ENCODE measurements at regions of chr22 and their contacts with region 1.

Region 1: DNA sequence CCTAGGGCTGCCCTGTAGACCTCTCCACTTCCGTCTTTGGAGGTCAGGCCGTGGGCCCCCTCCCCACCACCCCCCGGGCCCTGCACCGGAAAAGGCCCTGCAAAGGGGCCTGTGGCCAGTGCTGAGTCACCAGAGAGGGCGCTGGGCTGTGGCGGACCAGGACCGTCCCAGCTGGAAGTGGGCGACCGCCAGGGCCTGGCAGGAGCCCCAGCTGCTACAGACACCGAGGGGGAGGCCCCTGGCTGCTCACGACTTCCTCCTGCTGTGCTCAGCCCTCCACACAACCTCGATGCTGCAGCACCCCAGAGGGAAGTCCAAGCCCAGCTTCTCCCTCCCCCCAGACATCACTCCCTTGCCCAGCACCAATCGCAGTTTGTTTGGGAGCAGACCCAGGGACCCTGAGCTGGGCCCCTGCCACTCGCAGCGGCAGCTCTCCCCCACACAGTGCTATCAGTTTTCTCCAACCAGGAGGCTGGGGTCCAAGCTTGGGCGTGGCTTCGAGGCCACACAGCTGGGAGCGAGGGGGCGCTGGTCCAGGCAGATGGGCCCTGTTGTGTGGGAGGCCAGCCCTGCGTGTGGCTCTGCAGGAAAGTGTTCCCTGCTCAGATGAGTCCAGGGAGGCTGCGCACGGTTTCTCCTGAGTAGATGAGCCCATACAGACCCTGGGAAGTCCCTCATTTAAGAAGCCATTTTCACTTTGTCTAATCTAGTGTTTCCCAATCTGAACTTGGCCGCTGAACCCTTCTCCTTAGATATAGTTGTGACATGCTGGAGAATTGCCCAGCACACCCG is 5.6 kb upstream of the SH3BP1 start:
- DNase-seq: peak; percentile 66 to 80
- ATAC-seq: peak; percentile 57 to 73 (median 59)
- H3K4me3 ChIP-seq: peak overlapping the region; percentile 8
- H3K4me3 Mint-ChIP-seq: peak overlapping the region; percentile 80
- H3K27ac ChIP-seq: peak overlapping the region; percentile 83
- H3K27ac Mint-ChIP-seq: peak overlapping the region; percentile 93 to 99
- H3K4me1 ChIP-seq: peaks cover 99% of the 10 kb centered on the region
- H3K4me1 Mint-ChIP-seq: peaks cover 56 to 88% of the 10 kb centered on the region in 2 donors
- H3K27me3 ChIP-seq: no peaks in the 10 kb centered on the region
- H3K27me3 Mint-ChIP-seq: no peaks in the 10 kb centered on the region
- CTCF ChIP-seq: no peak

Region 2: GRCh38 chr22:36252754-36253517 is 1380.9 kb before region 1 on chr22 and contains the start of gene APOL1:
- intact Hi-C with region 1: no loop called
- DNase-seq: peak; percentile 31 to 83
- ATAC-seq: peak; percentile 95 to 98 (median 96)
- H3K4me3 ChIP-seq: peak within 1 kb of the TSS; percentile 40
- H3K4me3 Mint-ChIP-seq: peak within 1 kb of the TSS; percentile 92
- H3K27ac ChIP-seq: peak within 1 kb of the TSS; percentile 64
- H3K27ac Mint-ChIP-seq: peak within 1 kb of the TSS; percentile 95 to 98
- H3K4me1 ChIP-seq: peaks cover 45% of the 10 kb centered on the region
- H3K4me1 Mint-ChIP-seq: peaks cover 49 to 63% of the 10 kb centered on the region in 2 donors
- H3K27me3 ChIP-seq: no peaks in the 10 kb centered on the region
- H3K27me3 Mint-ChIP-seq: no peaks in the 10 kb centered on the region
- CTCF ChIP-seq: no peak
- total RNA-seq, gene APOL1: 39.5 to 51.2 (median 49.6) TPM

Region 3: DNA sequence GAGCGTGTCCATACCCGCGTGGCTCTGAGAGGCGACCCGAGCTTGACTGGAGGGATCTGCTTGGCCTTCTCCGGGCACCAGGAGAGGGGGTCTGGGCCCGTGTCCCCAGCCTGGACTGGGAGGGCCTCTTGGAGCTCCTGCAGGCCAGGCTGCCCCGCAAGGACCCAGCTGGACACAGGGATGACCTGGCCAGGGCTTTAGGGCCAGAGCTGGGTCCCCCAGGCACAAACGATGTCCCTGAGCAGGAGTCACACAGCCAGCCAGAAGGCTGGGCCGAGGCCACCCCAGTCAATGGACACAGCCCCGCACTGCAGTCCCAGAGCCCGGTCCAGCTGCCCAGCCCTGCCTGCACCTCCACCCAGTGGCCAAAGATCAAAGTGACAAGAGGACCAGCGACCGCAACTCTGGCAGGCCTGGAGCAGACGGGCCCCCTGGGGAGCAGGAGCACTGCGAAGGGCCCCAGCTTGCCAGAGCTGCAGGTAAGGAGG is 101.2 kb after region 1 on chr22:
- intact Hi-C with region 1: no loop called
- DNase-seq: no peak
- ATAC-seq: no peak
- H3K4me3 ChIP-seq: no peak overlapping the region
- H3K4me3 Mint-ChIP-seq: no peak overlapping the region
- H3K27ac ChIP-seq: no peak overlapping the region
- H3K27ac Mint-ChIP-seq: no peak overlapping the region
- H3K4me1 ChIP-seq: peaks cover 9% of the 10 kb centered on the region
- H3K4me1 Mint-ChIP-seq: no peaks in the 10 kb centered on the region
- H3K27me3 ChIP-seq: no peaks in the 10 kb centered on the region
- H3K27me3 Mint-ChIP-seq: peaks cover 0 to 8% of the 10 kb centered on the region in 2 donors
- CTCF ChIP-seq: no peak

Region 4: GRCh38 chr22:37849089-37849751 is 215.4 kb after region 1 on chr22 and contains the start of gene EIF3L:
- intact Hi-C with region 1: loop called (anchors 10 kb)
- DNase-seq: peak; percentile 84 to 93
- ATAC-seq: peak; percentile 71 to 80 (median 72)
- H3K4me3 ChIP-seq: peak within 1 kb of the TSS; percentile 57
- H3K4me3 Mint-ChIP-seq: peak within 1 kb of the TSS; percentile 99
- H3K27ac ChIP-seq: peak within 1 kb of the TSS; percentile 88
- H3K27ac Mint-ChIP-seq: peak within 1 kb of the TSS; percentile 99
- H3K4me1 ChIP-seq: peaks cover 24% of the 10 kb centered on the region
- H3K4me1 Mint-ChIP-seq: peaks cover 25 to 45% of the 10 kb centered on the region in 2 donors
- H3K27me3 ChIP-seq: no peaks in the 10 kb centered on the region
- H3K27me3 Mint-ChIP-seq: no peaks in the 10 kb centered on the region
- CTCF ChIP-seq: no peak
- total RNA-seq, gene EIF3L: 276 to 295 (median 291) TPM

Measured in natural killer cell (primary cell).